ENCODE measurements at regions of chr14 and their contacts with region 1.

Region 1: GRCh38 chr14:59126710-59127432 is 61.6 kb upstream of the DAAM1 start:
- DNase-seq: peak; percentile 30
- ATAC-seq: peak; percentile 89
- H3K4me3 ChIP-seq: no peak overlapping the region
- H3K27ac ChIP-seq: no peak overlapping the region
- H3K4me1 ChIP-seq: no peaks in the 10 kb centered on the region
- H3K27me3 ChIP-seq: peaks cover 4% of the 10 kb centered on the region; the same call in 1 of the 2 replicates
- CTCF ChIP-seq: peak; percentile 66; the same call in 1 of the 2 replicates

Region 2: GRCh38 chr14:57918791-57919190 is 1208.1 kb before region 1 on chr14:
- CTCF ChIA-PET with region 1: no interaction called
- POLR2A ChIA-PET with region 1: no interaction called
- in situ Hi-C with region 1: no loop called
- intact Hi-C with region 1: no loop called
- DNase-seq: no peak
- ATAC-seq: no peak
- H3K4me3 ChIP-seq: no peak overlapping the region
- H3K27ac ChIP-seq: no peak overlapping the region
- H3K4me1 ChIP-seq: no peaks in the 10 kb centered on the region
- H3K27me3 ChIP-seq: no peaks in the 10 kb centered on the region
- CTCF ChIP-seq: no peak

Region 3: DNA sequence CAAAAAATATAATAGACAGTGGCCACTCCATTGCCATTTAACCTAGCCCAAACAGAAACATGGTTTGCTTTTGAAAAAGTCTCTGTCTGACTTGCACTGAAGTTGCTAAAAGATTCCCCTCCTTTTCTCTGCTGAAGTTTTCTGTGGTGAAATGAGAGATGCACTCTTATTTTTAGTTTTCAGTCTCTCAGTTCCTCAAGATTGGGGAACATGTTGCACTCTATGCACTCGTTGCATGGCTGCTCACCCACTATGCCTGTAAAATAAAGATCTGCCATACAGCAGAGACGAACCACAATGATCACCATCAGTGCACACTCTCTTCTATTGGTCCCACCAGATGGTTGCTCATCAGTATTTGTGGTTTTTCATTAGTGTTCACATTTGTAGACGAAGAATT is 48.5 kb after region 1 on chr14:
- CTCF ChIA-PET with region 1: interaction called, 11 read pairs
- POLR2A ChIA-PET with region 1: no interaction called
- in situ Hi-C with region 1: no loop called
- intact Hi-C with region 1: no loop called
- DNase-seq: no peak
- ATAC-seq: no peak
- H3K4me3 ChIP-seq: no peak overlapping the region
- H3K27ac ChIP-seq: no peak overlapping the region
- H3K4me1 ChIP-seq: no peaks in the 10 kb centered on the region
- H3K27me3 ChIP-seq: peaks cover 2% of the 10 kb centered on the region; the same call in 1 of the 2 replicates
- CTCF ChIP-seq: no peak

Measured in Panc1 (cell line).